PC-9 (cell line): ENCODE measurements at regions of chr19 and their contacts with region 1.

Region 1: GRCh38 chr19:45643024-45643926 is 4.1 kb upstream of the EML2 start:
- DNase-seq: peak; percentile 75 to 87
- H3K4me3 ChIP-seq: no peak overlapping the region
- H3K27ac ChIP-seq: peak overlapping the region; percentile 88; the same call in 1 of the 2 replicates
- H3K4me1 ChIP-seq: peaks cover 32% of the 10 kb centered on the region
- H3K27me3 ChIP-seq: no peaks in the 10 kb centered on the region
- CTCF ChIP-seq: peak; percentile 100

Region 2: DNA sequence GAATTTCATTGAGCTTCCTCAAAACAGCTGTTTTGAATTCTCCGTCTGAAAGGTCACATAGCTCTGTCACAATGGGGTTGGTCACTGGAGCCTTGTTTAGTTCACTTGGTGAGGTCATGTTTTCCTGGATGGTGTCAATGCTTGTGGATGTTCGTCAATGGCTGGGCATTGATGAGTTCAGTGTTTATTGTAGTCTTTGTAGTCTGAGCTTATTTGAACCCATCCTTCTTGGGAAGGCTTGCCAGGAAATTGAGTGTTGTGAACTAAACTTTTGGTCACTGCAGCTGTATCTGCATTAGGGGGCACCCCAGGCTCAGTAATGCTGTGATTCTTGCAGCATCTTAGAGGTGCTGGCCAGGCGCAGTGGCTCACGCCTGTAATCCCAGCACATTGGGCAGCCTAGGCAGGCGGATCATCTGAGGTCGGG is 442.7 kb before region 1 on chr19:
- CTCF ChIA-PET with region 1: no interaction called
- POLR2A ChIA-PET with region 1: no interaction called
- intact Hi-C with region 1: no loop called
- DNase-seq: peak in 1 of 2 experiments; percentile 11
- H3K4me3 ChIP-seq: no peak overlapping the region
- H3K27ac ChIP-seq: no peak overlapping the region
- H3K4me1 ChIP-seq: no peaks in the 10 kb centered on the region
- H3K27me3 ChIP-seq: no peaks in the 10 kb centered on the region
- CTCF ChIP-seq: peak; percentile 44

Region 3: GRCh38 chr19:45455707-45456499 is 187.4 kb before region 1 on chr19:
- CTCF ChIA-PET with region 1: interaction called, 16 read pairs
- POLR2A ChIA-PET with region 1: no interaction called
- intact Hi-C with region 1: no loop called
- DNase-seq: peak; percentile 98
- H3K4me3 ChIP-seq: peak overlapping the region; percentile 53; the same call in 1 of the 2 replicates
- H3K27ac ChIP-seq: peak overlapping the region; percentile 93
- H3K4me1 ChIP-seq: peaks cover 38% of the 10 kb centered on the region
- H3K27me3 ChIP-seq: no peaks in the 10 kb centered on the region
- CTCF ChIP-seq: no peak

Region 4: DNA sequence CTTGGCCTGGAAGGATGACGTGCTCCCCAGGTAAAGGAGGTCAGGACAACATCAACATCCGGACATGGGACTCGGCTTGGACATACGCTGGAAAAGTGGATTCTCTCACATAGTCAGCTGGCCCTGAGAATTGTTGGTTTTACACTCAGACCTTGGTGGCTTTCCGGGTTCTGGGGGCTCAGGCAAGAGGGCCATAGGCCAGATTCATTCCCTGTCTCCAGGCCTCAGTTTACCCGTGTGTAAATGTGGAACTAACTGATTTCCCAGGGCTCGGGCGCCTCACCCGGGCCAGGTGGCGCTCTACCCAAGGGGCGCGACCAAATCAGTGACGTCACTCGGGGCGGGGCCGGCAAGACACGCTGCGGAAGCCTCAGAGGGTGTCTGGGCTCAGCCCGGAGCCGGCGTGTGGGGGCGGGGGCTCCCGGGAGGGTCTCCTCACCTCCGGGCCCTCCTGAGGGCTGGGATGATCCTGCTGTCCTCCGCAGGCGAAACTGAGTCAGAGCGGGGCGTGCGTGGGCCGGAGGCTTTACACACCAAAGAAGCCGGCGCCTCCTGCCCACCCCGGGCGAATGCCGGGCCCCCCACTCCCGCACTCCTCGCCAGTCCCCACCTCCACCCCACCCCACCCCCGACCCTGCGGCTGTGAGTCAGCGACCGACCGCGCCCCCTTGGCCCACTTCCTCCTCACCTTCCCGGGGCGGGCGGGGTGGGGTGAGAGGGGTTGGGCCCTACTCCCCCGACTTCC is 136.9 kb before region 1 on chr19:
- CTCF ChIA-PET with region 1: no interaction called
- POLR2A ChIA-PET with region 1: interaction called, 3 read pairs
- intact Hi-C with region 1: loop called (anchors 5 kb)
- DNase-seq: peak; percentile 85 to 96
- H3K4me3 ChIP-seq: peak overlapping the region; percentile 97
- H3K27ac ChIP-seq: peak overlapping the region; percentile 95
- H3K4me1 ChIP-seq: peaks cover 21% of the 10 kb centered on the region
- H3K27me3 ChIP-seq: no peaks in the 10 kb centered on the region
- CTCF ChIP-seq: peak; percentile 74

Region 5: GRCh38 chr19:45584332-45585157 is 58.7 kb before region 1 on chr19 and contains the start of gene OPA3:
- CTCF ChIA-PET with region 1: interaction called, 5 read pairs
- POLR2A ChIA-PET with region 1: no interaction called
- intact Hi-C with region 1: loop called (anchors 2 kb)
- DNase-seq: peak; percentile 97 to 99
- H3K4me3 ChIP-seq: peak within 1 kb of the TSS; percentile 87
- H3K27ac ChIP-seq: peak within 1 kb of the TSS; percentile 80
- H3K4me1 ChIP-seq: peaks cover 16% of the 10 kb centered on the region
- H3K27me3 ChIP-seq: no peaks in the 10 kb centered on the region
- CTCF ChIP-seq: peak; percentile 41; the same call in 1 of the 2 replicates
- total RNA-seq, gene OPA3: 10.8 and 15.2 TPM in 2 replicates

Region 6: DNA sequence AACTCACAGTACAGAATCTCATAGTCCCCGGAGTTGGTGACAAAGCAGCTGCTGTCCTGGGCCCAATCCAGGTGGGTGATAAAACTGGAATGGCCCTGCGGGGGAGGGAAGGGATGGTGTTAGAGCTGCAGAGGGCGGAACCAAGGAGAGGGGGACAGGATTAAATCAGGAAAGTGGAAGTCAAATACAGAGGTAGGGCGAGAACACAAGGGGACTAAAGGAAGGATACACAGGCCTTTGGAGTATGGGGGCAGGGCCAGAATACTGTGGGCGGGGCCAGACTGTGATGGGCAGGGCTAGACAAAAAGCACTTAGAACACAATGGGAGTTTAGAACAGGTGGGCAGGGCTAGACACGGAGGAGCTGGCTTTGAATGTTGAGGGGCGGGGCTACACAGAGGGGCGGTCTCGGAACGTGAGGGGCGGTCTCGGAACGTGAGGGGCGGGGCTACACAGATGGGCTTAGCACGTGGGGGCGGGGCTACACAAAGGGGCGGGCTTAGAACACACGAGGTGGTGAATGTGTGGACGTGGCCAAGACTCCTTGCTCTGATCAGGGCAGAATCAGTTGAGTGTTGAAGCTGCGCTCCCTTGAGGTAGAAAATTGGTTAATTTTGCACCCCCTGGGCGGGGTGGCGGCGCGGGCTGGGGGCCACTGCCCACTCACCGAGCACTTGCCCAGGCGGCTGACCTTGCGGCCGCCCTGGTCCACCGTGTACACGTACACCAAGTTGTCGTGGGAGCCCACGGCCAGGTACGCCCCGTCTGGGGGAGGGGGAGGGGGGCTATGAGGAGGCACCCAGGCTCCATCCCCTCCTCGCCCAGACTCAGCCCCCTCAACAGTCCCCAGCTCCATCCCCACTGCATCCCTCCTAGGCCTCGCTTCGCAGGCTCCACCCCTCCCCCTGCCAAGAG is 27.2 kb before region 1 on chr19:
- CTCF ChIA-PET with region 1: interaction called, 6 read pairs
- POLR2A ChIA-PET with region 1: interaction called, 10 read pairs
- intact Hi-C with region 1: no loop called
- DNase-seq: peak; percentile 80 to 87
- H3K4me3 ChIP-seq: no peak overlapping the region
- H3K27ac ChIP-seq: peak overlapping the region; percentile 53
- H3K4me1 ChIP-seq: peaks cover 22% of the 10 kb centered on the region
- H3K27me3 ChIP-seq: no peaks in the 10 kb centered on the region
- CTCF ChIP-seq: no peak

Region 7: DNA sequence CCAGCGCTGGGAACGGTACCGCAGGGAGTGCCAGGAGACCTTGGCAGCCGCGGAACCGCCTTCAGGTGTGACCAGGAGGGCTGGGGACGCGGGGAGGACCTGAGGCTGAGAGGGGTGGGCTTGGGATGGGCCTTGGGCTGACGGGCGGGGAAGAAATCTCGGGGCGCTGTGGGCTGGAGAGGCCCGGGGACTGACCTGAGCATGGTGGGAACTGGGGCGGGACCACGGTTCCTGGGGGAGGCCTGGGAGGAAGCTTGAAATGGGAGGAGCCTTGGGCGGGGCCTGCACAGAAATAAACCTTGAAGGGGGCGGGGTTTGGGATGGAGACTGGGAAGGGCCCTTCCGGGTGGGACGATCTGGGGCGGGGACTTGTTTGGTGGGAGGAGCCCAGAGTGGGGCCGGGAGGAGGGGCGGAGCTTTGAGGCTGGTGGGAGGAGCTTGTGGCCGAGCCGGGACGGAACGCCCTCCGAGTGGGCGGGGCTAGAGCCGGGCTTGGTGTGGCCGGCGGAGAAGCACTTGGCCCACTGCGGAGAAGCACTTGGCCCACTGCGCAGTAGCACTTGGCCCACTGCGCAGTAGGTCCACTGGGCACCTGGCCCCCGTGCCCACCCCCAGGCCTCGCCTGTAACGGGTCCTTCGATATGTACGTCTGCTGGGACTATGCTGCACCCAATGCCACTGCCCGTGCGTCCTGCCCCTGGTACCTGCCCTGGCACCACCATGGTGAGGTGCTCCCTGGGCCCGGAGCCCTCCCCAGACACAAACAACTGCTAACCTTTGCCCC is 27.6 kb after region 1 on chr19:
- CTCF ChIA-PET with region 1: interaction called, 19 read pairs
- POLR2A ChIA-PET with region 1: no interaction called
- intact Hi-C with region 1: no loop called
- DNase-seq: peak; percentile 81 to 96
- H3K4me3 ChIP-seq: peak overlapping the region; percentile 51; the same call in 1 of the 2 replicates
- H3K27ac ChIP-seq: no peak overlapping the region
- H3K4me1 ChIP-seq: peaks cover 35% of the 10 kb centered on the region
- H3K27me3 ChIP-seq: no peaks in the 10 kb centered on the region
- CTCF ChIP-seq: no peak

Region 8: DNA sequence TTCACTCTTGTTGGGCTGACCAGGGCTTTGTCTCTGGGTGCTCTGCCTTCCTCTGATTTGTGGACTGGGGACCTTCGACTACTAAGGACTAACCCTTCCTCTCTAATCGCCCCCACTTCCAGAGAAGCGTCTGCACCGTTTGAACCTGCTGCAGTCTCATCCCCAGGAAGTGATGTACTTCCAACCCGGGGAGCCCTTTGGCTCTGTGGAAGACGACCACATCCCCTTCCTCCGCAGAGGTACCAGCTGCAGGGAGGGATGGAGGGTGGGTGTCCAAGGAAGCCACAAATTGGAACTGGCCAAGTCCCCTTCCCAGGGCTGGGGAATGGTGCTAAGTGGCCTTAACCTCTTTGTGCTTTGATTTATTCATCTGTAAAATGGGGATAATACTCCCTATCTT is 58.4 kb after region 1 on chr19:
- CTCF ChIA-PET with region 1: no interaction called
- POLR2A ChIA-PET with region 1: no interaction called
- intact Hi-C with region 1: no loop called
- DNase-seq: no peak
- H3K4me3 ChIP-seq: no peak overlapping the region
- H3K27ac ChIP-seq: no peak overlapping the region
- H3K4me1 ChIP-seq: 0 out of 2 replicates have a peak, but pooled peaks cover 7% of the 10 kb centered on the region
- H3K27me3 ChIP-seq: no peaks in the 10 kb centered on the region
- CTCF ChIP-seq: no peak